Activated CD4-positive, alpha-beta memory T cell treated with anti-CD3 and anti-CD28 coated beads, Interleukin-2, amount 10 ng/mL, durations not matched to agents 7 days and 5 days (primary cell): ENCODE measurements at regions of chr22 and their contacts with region 1.

Region 1: GRCh38 chr22:31630331-31631329 is 31.4 kb downstream of the PISD start:
- DNase-seq: peak; percentile 89
- H3K4me3 Mint-ChIP-seq: peak overlapping the region; percentile 78
- H3K27ac Mint-ChIP-seq: peak overlapping the region; percentile 83
- H3K4me1 Mint-ChIP-seq: peaks cover 43% of the 10 kb centered on the region
- H3K27me3 Mint-ChIP-seq: no peaks in the 10 kb centered on the region

Region 2: DNA sequence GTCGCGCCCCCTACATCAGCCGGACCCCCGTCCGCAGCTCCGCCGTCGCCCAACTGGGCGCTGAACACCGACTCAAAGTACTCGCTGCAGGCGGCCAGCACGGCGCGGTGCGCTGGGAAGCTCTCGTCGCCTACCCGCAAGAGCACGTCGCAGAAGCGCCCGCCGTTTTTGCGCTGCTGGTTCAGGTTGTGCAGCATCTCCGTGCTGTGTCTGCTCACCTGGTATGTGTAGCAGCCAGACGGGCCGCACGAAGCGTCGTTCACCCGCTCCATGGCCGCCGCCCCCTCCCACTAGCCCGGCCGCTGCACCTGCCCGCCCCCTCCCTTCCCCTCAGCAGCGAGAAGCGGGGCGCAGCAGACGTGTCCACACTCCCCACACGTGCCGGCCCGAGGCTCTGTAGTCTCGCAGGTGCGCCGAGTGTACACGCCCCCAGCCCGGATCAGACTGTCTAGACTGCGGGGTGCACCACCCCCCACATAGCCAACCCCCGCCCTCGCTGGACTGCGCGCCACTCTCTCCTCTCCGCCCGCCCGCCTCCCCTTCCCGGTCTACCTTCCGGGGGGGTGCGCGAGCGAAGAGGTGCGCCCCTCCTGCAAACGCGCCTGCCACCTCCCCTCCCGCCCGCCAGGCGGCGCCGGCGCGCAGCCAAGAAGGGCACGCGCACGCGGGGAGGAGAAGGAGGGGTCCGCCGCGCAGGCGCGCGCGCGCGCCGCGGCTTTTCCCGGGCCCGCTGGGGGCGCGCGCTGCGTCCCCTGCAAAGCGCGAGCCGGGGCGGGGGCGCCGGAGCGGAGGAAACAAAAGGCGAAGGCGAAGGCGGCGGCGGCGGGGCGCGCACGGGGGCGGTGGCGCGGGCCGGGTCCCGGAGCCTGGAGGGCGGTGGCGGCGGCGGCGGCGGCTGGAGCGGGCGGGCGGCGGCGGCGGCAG is 285.0 kb before region 1 on chr22:
- CTCF ChIA-PET with region 1: interaction called, 6 read pairs
- POLR2A ChIA-PET with region 1: interaction called, 13 read pairs
- DNase-seq: peak; percentile 88
- H3K4me3 Mint-ChIP-seq: peak overlapping the region; percentile 81
- H3K27ac Mint-ChIP-seq: peak overlapping the region; percentile 74
- H3K4me1 Mint-ChIP-seq: peaks cover 49% of the 10 kb centered on the region
- H3K27me3 Mint-ChIP-seq: no peaks in the 10 kb centered on the region

Region 3: GRCh38 chr22:31451709-31452571 is 178.7 kb before region 1 on chr22:
- CTCF ChIA-PET with region 1: interaction called, 17 read pairs
- POLR2A ChIA-PET with region 1: interaction called, 6 read pairs
- DNase-seq: no peak
- H3K4me3 Mint-ChIP-seq: no peak overlapping the region
- H3K27ac Mint-ChIP-seq: no peak overlapping the region
- H3K4me1 Mint-ChIP-seq: peaks cover 8% of the 10 kb centered on the region
- H3K27me3 Mint-ChIP-seq: no peaks in the 10 kb centered on the region

Region 4: DNA sequence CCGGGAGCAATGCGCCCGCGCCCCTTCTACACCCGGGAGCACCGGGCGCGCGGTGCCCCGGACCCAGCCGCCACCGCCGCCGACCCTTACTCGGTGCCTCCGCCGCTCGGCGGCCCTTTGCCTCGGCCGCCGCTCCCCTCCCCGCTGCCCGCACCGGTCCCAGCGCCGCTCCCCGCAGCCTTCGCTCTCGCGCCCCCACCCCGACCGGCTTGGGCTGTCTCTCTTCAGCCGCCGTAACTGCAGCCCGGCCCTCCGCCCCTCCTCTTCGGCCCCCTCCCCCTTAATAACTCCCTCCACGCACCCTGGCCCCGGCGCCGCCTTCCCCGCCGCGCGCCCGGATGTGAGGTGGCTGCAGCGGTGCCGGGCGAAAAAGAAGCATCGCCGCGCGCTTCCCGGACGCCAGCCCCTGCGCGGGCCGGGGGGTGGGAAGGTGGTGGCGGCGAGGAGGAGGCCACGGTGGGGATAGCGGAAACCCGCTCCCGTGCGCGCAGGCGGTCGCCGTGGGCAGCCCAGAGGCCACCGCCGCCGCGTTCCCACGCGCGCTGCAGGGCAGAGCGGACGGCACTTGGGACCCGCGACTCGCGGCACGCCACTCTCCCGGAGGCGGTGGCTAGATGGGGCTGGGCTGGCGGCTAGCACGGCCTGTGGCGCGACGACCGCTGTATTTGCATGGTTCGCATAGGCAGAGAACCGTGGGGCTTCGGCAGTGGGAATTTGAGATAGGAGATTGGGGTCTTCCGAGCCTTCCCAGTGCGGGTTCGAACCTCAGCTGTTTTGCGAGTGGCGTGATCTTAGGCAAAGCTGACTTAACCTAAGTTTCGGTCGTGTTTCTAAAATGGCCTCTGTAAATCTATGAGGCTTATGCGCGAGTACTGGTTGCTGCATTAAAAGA is 140.8 kb before region 1 on chr22 and contains the start of gene EIF4ENIF1:
- CTCF ChIA-PET with region 1: interaction called, 3 read pairs
- POLR2A ChIA-PET with region 1: interaction called, 11 read pairs
- DNase-seq: peak; percentile 85
- H3K4me3 Mint-ChIP-seq: peak within 1 kb of the TSS; percentile 86
- H3K27ac Mint-ChIP-seq: peak within 1 kb of the TSS; percentile 98
- H3K4me1 Mint-ChIP-seq: peaks cover 50% of the 10 kb centered on the region
- H3K27me3 Mint-ChIP-seq: no peaks in the 10 kb centered on the region
- total RNA-seq, gene EIF4ENIF1: 35.6 to 37.8 TPM

Region 5: GRCh38 chr22:31556627-31557203 is 73.9 kb before region 1 on chr22:
- CTCF ChIA-PET with region 1: interaction called, 23 read pairs
- POLR2A ChIA-PET with region 1: interaction called, 7 read pairs
- DNase-seq: no peak
- H3K4me3 Mint-ChIP-seq: no peak overlapping the region
- H3K27ac Mint-ChIP-seq: peak overlapping the region; percentile 44
- H3K4me1 Mint-ChIP-seq: peaks cover 19% of the 10 kb centered on the region
- H3K27me3 Mint-ChIP-seq: no peaks in the 10 kb centered on the region

Region 6: DNA sequence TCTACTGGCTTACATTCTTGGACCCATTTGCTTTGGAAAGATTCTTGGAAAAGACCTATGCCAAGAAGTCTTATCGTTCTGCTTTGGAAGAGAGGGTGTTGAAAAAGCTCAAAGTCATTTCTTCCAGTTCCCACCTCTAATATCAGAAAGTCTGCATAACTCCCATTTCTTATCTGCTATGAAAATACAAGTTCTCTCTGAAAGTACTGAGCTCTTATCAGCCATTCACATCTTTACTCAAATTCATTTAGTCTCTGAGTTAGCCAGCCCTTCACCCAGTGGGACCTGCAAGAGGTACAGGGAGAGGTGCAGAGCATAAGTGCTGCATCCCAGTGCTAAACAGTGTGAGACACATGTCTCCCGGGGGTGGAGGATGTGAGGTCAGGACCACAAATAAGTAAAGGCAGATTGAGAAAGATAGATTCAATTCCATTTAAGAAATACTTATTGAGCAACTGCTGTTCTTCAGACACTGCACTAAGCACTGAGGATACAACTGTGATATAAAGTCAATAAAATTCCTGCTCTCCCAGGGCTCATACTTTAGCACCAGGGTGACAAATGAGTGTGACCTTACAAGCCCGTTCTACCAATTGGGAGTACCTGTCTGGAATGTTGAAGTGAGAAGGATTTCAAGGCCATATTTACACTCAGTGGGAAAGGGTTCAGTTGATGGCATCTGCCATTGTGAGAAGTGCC is 45.3 kb before region 1 on chr22:
- CTCF ChIA-PET with region 1: no interaction called
- POLR2A ChIA-PET with region 1: interaction called, 15 read pairs
- DNase-seq: peak; percentile 32
- H3K4me3 Mint-ChIP-seq: peak overlapping the region; percentile 8
- H3K27ac Mint-ChIP-seq: peak overlapping the region; percentile 70
- H3K4me1 Mint-ChIP-seq: peaks cover 50% of the 10 kb centered on the region
- H3K27me3 Mint-ChIP-seq: no peaks in the 10 kb centered on the region